H1 (cell line): ENCODE measurements at regions of chr18 and their contacts with region 1.

Region 1: DNA sequence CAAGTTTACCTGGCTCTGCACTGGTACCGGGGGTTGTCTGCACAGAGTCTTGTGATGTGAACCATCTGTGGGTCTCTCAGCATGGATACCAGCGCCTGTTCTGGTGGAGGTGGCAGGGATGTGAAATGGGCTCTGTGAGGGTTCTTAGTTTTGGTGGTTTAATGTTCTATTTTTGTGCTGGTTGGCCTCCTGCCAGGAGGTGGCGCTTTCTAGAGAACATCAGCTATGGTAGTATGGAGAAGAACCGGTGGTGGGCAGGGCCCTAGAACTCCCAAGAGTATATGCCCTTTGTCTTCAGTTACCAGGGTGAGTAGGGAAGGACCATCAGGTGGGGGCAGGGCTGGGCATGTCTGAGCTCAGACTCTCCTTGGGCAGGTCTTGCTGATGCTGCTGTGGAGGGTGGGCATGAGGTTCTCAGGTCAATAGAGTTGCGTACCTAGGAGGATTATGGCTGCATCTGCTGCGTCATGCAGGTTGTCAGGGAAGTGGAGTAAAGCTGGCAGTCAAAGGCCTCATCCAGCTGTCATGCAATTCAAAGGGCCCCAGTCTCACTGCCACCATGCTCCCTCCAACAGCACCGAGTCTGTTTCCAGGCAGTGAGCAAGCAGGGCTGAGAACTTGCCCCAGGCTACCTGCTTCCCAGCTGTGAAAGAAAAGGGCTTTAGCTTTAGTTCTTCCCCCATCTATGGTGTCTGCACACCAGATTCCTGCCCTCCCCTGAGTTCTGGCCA is 278.0 kb downstream of the METTL4 start:
- DNase-seq: peak in 1 of 2 experiments; percentile 55
- H3K4me3 ChIP-seq: no peak overlapping the region
- H3K27ac ChIP-seq: no peak overlapping the region
- H3K4me1 ChIP-seq: no peaks in the 10 kb centered on the region
- H3K27me3 ChIP-seq: no peaks in the 10 kb centered on the region
- CTCF ChIP-seq: peak in 2 of 3 experiments; percentile 16 to 30; a peak in 2 of 4 replicates
- EP300 ChIP-seq: no peak
- POLR2A ChIP-seq: no peak
- RAD21 ChIP-seq: peak in 1 of 2 experiments; percentile 6; a peak in 1 of 4 replicates

Region 2: DNA sequence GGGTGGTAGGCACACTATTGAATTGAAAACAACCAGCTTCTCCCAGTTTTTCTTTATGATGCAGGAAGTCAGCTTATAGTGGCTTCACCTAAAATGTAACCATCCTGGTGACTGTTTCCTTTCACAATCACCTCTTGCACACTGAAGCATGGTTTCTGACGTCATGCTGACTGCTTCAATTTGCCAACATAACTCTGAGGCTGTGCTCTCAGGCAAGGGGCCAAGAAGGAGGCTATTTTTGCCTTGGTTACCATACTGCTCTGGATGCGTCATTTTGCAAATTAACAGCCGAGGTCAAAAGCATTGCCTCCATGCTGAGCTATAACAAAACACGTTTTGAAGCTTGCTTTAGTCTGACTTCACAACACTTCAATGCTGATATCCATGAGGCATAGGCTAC is 119.8 kb before region 1 on chr18:
- CTCF ChIA-PET with region 1: no interaction called
- POLR2A ChIA-PET with region 1: no interaction called
- DNase-seq: no peak
- H3K4me3 ChIP-seq: no peak overlapping the region
- H3K27ac ChIP-seq: no peak overlapping the region
- H3K4me1 ChIP-seq: peaks cover 0 to 4% (median 1%) of the 10 kb centered on the region in 4 experiments; a peak in 2 of 7 replicates
- H3K27me3 ChIP-seq: no peaks in the 10 kb centered on the region
- CTCF ChIP-seq: no peak
- EP300 ChIP-seq: no peak
- POLR2A ChIP-seq: no peak
- RAD21 ChIP-seq: no peak

Region 3: DNA sequence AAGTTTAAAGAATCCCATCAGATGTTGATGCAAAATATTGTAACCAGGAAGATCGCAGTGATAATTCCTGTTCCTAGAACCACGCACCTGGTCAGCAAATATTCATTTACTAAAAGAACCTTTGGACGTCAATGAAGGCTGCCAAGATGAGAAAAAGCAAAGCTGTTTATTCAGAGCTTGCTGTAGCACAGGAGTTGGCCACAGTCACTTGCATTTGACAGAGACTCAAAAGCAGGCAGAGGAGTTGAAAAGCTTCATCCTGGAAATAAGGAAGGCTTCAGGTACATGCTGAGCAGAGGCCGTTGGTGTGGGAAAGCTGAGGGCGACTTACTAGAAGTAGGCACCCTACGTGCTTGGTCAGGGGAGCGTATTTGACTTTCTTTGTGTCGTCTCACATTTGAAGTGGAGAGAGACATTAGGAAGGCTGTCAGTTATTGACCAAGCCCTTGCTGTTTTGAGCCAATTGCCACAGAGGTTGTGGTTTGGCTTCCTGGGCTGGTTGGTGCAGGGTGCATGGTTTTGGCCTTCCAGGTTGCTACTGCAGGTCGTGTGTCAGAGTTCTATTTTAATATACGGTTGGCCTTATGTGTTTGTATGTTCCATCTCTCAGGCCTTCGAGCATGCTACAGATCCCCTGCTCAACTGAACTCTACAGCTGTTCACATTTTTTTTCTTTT is 11.6 kb before region 1 on chr18:
- CTCF ChIA-PET with region 1: interaction called, 13 read pairs
- POLR2A ChIA-PET with region 1: no interaction called
- DNase-seq: no peak
- H3K4me3 ChIP-seq: no peak overlapping the region
- H3K27ac ChIP-seq: no peak overlapping the region
- H3K4me1 ChIP-seq: no peaks in the 10 kb centered on the region
- H3K27me3 ChIP-seq: no peaks in the 10 kb centered on the region
- CTCF ChIP-seq: no peak
- EP300 ChIP-seq: no peak
- POLR2A ChIP-seq: no peak
- RAD21 ChIP-seq: no peak